IMR-90 (cell line): ENCODE measurements at regions of chr7 and their contacts with region 1.

Region 1: GRCh38 chr7:81285142-81285871 is 366.5 kb upstream of the SEMA3C start:
- DNase-seq: peak; percentile 87
- ATAC-seq: peak; percentile 92
- H3K4me3 ChIP-seq: no peak overlapping the region
- H3K27ac ChIP-seq: no peak overlapping the region
- H3K4me1 ChIP-seq: 0 out of 2 replicates have a peak, but pooled peaks cover 2% of the 10 kb centered on the region
- H3K27me3 ChIP-seq: peaks cover 2% of the 10 kb centered on the region; the same call in 1 of the 2 replicates
- CTCF ChIP-seq: 0 out of 2 replicates have a peak, but pooled peaks have one; percentile 27
- POLR2A ChIP-seq: no peak
- RAD21 ChIP-seq: no peak

Region 2: GRCh38 chr7:81447351-81447952 is 162.1 kb after region 1 on chr7:
- CTCF ChIA-PET with region 1: no interaction called
- POLR2A ChIA-PET with region 1: no interaction called
- dilution Hi-C with region 1: no loop called
- in situ Hi-C with region 1: no loop called
- intact Hi-C with region 1: loop called (anchors 10 kb)
- DNase-seq: peak; percentile 70
- ATAC-seq: peak; percentile 91
- H3K4me3 ChIP-seq: no peak overlapping the region
- H3K27ac ChIP-seq: no peak overlapping the region
- H3K4me1 ChIP-seq: no peaks in the 10 kb centered on the region
- H3K27me3 ChIP-seq: no peaks in the 10 kb centered on the region
- CTCF ChIP-seq: peak; percentile 59
- POLR2A ChIP-seq: no peak
- RAD21 ChIP-seq: peak; percentile 72

Region 3: GRCh38 chr7:81956520-81956919 is 671.2 kb after region 1 on chr7:
- CTCF ChIA-PET with region 1: no interaction called
- POLR2A ChIA-PET with region 1: no interaction called
- dilution Hi-C with region 1: no loop called
- in situ Hi-C with region 1: no loop called
- intact Hi-C with region 1: loop called (anchors 5 kb)
- DNase-seq: peak; percentile 73
- ATAC-seq: peak; percentile 85
- H3K4me3 ChIP-seq: no peak overlapping the region
- H3K27ac ChIP-seq: no peak overlapping the region
- H3K4me1 ChIP-seq: no peaks in the 10 kb centered on the region
- H3K27me3 ChIP-seq: no peaks in the 10 kb centered on the region
- CTCF ChIP-seq: peak; percentile 71
- POLR2A ChIP-seq: no peak
- RAD21 ChIP-seq: peak; percentile 81